Activated CD4-positive, alpha-beta T cell treated with anti-CD3 and anti-CD28 coated beads for 36 hours (primary cell): ENCODE measurements at regions of chr22 and their contacts with region 1.

Region 1: DNA sequence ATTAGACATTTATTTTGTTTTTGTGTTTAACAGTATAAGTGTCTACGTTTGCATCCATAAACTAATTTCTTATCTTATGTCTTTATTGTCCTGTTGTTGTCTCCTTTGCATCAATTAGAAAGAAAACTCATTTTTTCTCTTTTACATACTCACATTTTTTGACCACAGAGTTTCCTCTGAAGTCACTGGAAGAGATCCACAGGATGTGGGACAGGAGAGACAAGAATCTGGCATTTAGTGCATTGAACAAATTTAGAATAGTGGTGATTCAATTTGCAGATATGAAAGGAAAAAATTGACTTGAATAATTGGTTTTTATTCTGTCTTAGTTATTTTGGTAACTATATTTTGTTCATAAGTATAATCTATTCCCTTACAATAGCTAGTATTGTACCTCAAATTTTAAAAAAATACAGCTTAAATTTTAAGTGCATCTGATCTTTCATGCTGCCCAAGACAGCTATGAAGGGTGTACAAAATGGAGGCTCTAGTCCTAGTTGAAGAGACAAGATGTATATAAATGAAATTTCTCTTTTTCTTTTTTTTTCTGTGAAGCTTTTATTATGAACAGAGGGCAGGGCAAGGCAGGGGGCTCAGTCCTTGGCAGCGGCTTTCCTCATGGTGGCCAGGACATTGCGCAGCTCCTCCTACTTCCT is 24.4 kb downstream of the HORMAD2 start:
- DNase-seq: no peak
- ATAC-seq: peak; percentile 81
- H3K4me3 Mint-ChIP-seq: no peak overlapping the region
- H3K27ac Mint-ChIP-seq: peak overlapping the region; percentile 44
- H3K4me1 Mint-ChIP-seq: peaks cover 43% of the 10 kb centered on the region
- H3K27me3 Mint-ChIP-seq: no peaks in the 10 kb centered on the region

Region 2: GRCh38 chr22:29994027-29994715 is 110.5 kb before region 1 on chr22:
- CTCF ChIA-PET with region 1: no interaction called
- POLR2A ChIA-PET with region 1: no interaction called
- intact Hi-C with region 1: no loop called
- DNase-seq: no peak
- ATAC-seq: peak; percentile 90
- H3K4me3 Mint-ChIP-seq: no peak overlapping the region
- H3K27ac Mint-ChIP-seq: peak overlapping the region; percentile 28
- H3K4me1 Mint-ChIP-seq: peaks cover 14% of the 10 kb centered on the region
- H3K27me3 Mint-ChIP-seq: no peaks in the 10 kb centered on the region

Region 3: GRCh38 chr22:30178181-30179126 is 73.8 kb after region 1 on chr22:
- CTCF ChIA-PET with region 1: interaction called, 10 read pairs
- POLR2A ChIA-PET with region 1: no interaction called
- intact Hi-C with region 1: loop called in 1 of 2 experiments (anchors 5 kb)
- DNase-seq: peak; percentile 73
- ATAC-seq: peak; percentile 88
- H3K4me3 Mint-ChIP-seq: peak overlapping the region; percentile 18
- H3K27ac Mint-ChIP-seq: peak overlapping the region; percentile 83
- H3K4me1 Mint-ChIP-seq: peaks cover 69% of the 10 kb centered on the region
- H3K27me3 Mint-ChIP-seq: no peaks in the 10 kb centered on the region

Region 4: DNA sequence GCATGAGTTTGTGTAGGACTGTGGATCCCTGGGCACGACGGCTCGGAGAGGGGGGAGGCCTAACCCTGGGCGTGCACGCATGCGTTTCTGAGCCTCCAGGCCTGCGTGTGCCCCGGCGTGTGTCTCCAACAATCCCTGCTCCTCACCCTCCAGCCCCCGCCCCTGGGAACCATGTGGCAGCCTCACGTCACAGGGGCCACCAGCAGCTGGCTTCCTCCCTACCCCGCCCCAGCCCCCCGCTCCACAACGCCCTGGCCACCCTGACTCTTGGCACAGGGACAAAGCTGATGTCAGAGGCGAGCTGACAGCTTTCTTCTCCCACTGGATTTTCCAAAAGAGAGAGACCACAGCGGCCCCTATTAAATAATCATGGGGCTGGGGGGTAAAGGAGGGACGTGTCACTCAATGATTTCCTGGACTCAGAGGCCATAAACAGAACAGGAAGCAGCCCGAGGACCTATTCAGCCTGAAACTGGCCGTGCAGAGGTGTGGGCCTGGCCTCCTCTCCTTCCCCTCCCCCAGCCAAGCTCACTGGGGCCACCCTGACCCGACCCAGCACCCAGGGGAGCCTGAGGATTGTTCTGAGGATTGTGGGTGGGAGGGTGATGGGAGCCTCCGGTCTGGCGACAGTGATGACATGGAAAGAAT is 148.7 kb after region 1 on chr22:
- CTCF ChIA-PET with region 1: interaction called, 55 read pairs
- POLR2A ChIA-PET with region 1: interaction called, 3 read pairs
- intact Hi-C with region 1: loop called (anchors 1 kb)
- DNase-seq: no peak
- ATAC-seq: no peak
- H3K4me3 Mint-ChIP-seq: no peak overlapping the region
- H3K27ac Mint-ChIP-seq: no peak overlapping the region
- H3K4me1 Mint-ChIP-seq: peaks cover 25% of the 10 kb centered on the region
- H3K27me3 Mint-ChIP-seq: no peaks in the 10 kb centered on the region

Region 5: DNA sequence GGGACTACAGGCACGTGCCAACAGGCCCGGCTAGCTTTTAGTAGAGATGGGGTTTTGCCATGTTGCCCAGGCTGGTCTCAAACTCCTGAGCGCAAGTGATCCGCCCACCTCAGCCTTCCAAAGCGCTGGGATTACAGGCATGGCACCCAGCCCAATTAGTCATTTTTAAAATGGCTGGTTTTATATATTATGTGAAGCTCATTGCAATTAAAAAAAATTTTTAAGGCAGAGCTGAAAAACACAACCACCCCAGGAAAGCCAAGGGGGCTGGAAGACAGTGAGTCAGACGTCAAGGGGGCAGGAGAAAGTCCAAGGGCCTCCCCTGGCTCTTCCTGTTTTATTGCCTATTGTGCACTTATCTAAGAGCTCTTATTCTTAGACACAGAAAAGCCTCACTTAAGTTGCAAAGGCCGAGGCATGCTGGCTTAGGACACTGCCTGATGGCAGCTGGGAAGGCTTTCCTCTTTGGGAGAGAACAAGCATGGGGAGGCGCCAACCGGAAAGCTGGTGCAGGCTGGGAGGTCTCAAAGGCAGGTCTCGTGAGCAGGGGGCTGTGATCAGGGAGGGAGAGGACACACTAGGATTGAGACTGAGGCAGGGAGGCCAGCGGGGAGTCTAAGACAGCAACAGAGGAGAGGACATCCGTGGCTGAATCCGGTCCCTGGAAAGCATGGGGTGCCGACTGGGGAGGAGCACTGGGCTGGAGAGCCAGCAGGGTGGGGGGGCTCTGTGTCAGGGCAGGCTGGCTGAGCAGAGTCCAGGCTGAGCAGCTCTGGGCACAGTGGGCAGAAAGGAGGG is 173.1 kb after region 1 on chr22:
- CTCF ChIA-PET with region 1: interaction called, 11 read pairs
- POLR2A ChIA-PET with region 1: no interaction called
- intact Hi-C with region 1: no loop called
- DNase-seq: no peak
- ATAC-seq: no peak
- H3K4me3 Mint-ChIP-seq: no peak overlapping the region
- H3K27ac Mint-ChIP-seq: no peak overlapping the region
- H3K4me1 Mint-ChIP-seq: peaks cover 45% of the 10 kb centered on the region
- H3K27me3 Mint-ChIP-seq: no peaks in the 10 kb centered on the region

Region 6: DNA sequence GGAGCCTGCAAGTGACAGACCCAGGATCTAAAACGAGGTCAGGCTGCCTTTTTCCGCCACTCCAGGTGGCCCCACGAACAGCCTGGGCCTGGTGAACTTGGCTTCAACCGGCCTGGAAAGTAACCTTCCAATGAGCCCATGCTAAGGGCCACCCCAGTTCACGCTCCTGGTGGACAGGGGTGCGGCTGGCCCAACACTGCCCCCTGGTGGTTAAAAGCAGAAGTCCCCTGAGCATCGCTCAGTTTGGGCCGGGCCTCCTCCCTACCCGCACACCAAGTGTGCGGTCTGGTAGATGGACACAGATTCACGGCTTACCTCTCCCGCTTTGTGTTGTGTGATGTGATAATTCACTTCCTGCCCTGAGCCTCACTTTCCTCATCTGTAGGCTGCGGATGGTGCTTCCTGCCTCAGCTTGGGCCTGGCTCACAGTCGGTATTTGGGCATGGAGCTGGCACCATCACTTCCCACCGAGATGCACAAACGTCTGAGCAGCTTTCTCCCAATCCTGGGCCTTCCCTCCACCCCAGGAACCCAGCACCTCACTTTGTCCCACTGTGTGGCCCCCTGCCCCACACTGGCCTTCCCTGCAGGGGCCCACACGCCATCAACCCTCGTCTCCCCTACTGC is 380.8 kb after region 1 on chr22:
- CTCF ChIA-PET with region 1: no interaction called
- POLR2A ChIA-PET with region 1: no interaction called
- intact Hi-C with region 1: loop called in 1 of 2 experiments (anchors 10 kb)
- DNase-seq: peak; percentile 86
- ATAC-seq: peak; percentile 100
- H3K4me3 Mint-ChIP-seq: no peak overlapping the region
- H3K27ac Mint-ChIP-seq: no peak overlapping the region
- H3K4me1 Mint-ChIP-seq: no peaks in the 10 kb centered on the region
- H3K27me3 Mint-ChIP-seq: no peaks in the 10 kb centered on the region